Natural killer cell (primary cell): ENCODE measurements at regions of chr1 and their contacts with region 1.

Region 1: DNA sequence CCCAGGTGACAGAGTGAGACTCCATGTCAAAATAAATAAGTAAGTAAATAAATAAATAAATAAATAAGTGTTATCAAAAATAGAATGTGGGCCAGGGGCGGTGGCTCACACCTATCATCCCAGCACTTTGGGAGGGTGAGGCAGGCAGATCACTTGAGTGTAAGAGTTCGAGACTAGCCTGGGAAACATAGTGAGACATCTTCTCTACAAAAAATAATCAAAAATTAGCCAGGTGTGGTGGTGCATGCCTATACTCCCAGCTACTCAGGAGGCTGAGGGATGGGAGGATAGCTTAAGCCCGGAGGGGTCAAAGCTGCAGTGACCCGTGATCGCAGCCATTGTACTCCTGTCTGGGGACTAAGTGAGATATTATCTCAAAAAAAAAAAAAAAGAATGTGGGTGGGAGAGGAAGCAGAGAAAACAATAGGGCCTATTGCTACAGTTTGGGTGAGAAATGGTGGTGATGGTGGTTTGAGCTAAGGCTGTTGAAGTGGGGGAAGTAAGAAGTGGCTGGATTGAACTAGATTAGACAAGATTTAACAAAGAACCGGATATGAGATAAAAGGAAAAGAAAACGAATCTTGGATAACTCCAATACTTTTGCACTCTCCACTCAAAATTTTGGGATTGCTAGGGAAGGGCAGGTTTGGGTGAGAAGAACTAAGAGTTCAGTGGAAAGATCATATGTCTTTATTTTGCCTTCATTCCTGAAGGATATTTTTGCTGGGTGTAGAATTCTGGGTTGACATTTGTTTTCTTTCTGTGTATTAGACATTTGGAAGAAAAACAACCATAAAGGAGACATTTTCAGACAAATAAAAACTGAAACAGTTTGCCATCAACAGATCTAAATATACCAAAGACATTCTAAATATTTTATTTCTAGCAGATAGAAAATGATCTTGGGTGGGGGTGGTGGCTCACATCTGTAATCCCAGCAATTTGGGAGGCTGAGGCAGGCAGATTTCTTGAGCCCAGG is 57.1 kb upstream of the SPOCD1 start:
- DNase-seq: peak in 1 of 2 donors; percentile 70
- ATAC-seq: peak; percentile 87 to 98 (median 93)
- H3K4me3 ChIP-seq: no peak overlapping the region
- H3K4me3 Mint-ChIP-seq: peak overlapping the region; percentile 83
- H3K27ac ChIP-seq: peak overlapping the region; percentile 93
- H3K27ac Mint-ChIP-seq: peak overlapping the region; percentile 88 to 90
- H3K4me1 ChIP-seq: peaks cover 26% of the 10 kb centered on the region
- H3K4me1 Mint-ChIP-seq: peaks cover 40 to 52% of the 10 kb centered on the region in 2 donors
- H3K27me3 ChIP-seq: no peaks in the 10 kb centered on the region
- H3K27me3 Mint-ChIP-seq: no peaks in the 10 kb centered on the region
- CTCF ChIP-seq: no peak

Region 2: DNA sequence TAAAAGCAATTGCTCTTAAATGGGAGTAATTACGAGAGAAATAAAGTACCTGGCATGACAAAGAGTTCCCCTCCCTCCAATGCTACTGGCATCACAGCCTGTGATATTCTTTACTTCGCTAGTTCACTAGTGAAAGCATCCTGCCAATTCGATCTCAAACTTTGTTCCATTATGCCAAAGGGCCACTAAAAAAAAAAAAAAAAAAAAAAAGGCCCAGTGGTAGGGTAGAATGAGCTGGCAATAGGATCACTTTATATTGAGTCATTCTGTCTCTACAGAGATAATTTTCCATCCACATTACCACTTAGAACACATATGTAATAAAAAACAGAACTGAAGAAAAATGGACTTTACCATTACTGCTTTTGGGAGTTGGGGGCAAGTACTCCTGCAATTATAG is 818.6 kb before region 1 on chr1:
- intact Hi-C with region 1: no loop called
- DNase-seq: no peak
- ATAC-seq: peak in 1 of 3 donors; percentile 34
- H3K4me3 ChIP-seq: no peak overlapping the region
- H3K4me3 Mint-ChIP-seq: peak overlapping the region; percentile 58
- H3K27ac ChIP-seq: no peak overlapping the region
- H3K27ac Mint-ChIP-seq: peak overlapping the region; percentile 70 to 83
- H3K4me1 ChIP-seq: peaks cover 34% of the 10 kb centered on the region
- H3K4me1 Mint-ChIP-seq: peaks cover 52 to 55% of the 10 kb centered on the region in 2 donors
- H3K27me3 ChIP-seq: no peaks in the 10 kb centered on the region
- H3K27me3 Mint-ChIP-seq: no peaks in the 10 kb centered on the region
- CTCF ChIP-seq: no peak

Region 3: GRCh38 chr1:31831397-31832378 is 41.3 kb before region 1 on chr1:
- intact Hi-C with region 1: loop called (anchors 5 kb)
- DNase-seq: no peak
- ATAC-seq: no peak
- H3K4me3 ChIP-seq: no peak overlapping the region
- H3K4me3 Mint-ChIP-seq: no peak overlapping the region
- H3K27ac ChIP-seq: no peak overlapping the region
- H3K27ac Mint-ChIP-seq: no peak overlapping the region
- H3K4me1 ChIP-seq: peaks cover 29% of the 10 kb centered on the region
- H3K4me1 Mint-ChIP-seq: peaks cover 35 to 38% of the 10 kb centered on the region in 2 donors
- H3K27me3 ChIP-seq: no peaks in the 10 kb centered on the region
- H3K27me3 Mint-ChIP-seq: no peaks in the 10 kb centered on the region
- CTCF ChIP-seq: no peak

Region 4: GRCh38 chr1:31912839-31913239 is 39.9 kb after region 1 on chr1:
- intact Hi-C with region 1: loop called (anchors 1 kb)
- DNase-seq: no peak
- ATAC-seq: no peak
- H3K4me3 ChIP-seq: no peak overlapping the region
- H3K4me3 Mint-ChIP-seq: peak overlapping the region; percentile 13
- H3K27ac ChIP-seq: no peak overlapping the region
- H3K27ac Mint-ChIP-seq: peak overlapping the region; percentile 66 to 72
- H3K4me1 ChIP-seq: peaks cover 3% of the 10 kb centered on the region
- H3K4me1 Mint-ChIP-seq: peaks cover 49 to 59% of the 10 kb centered on the region in 2 donors
- H3K27me3 ChIP-seq: no peaks in the 10 kb centered on the region
- H3K27me3 Mint-ChIP-seq: no peaks in the 10 kb centered on the region
- CTCF ChIP-seq: no peak

Region 5: GRCh38 chr1:31944205-31945089 is 71.5 kb after region 1 on chr1:
- intact Hi-C with region 1: loop called (anchors 5 kb)
- DNase-seq: peak; percentile 63 to 87
- ATAC-seq: peak; percentile 50 to 83 (median 70)
- H3K4me3 ChIP-seq: peak overlapping the region; percentile 49
- H3K4me3 Mint-ChIP-seq: peak overlapping the region; percentile 81
- H3K27ac ChIP-seq: peak overlapping the region; percentile 89
- H3K27ac Mint-ChIP-seq: peak overlapping the region; percentile 91 to 94
- H3K4me1 ChIP-seq: peaks cover 67% of the 10 kb centered on the region
- H3K4me1 Mint-ChIP-seq: peaks cover 42 to 53% of the 10 kb centered on the region in 2 donors
- H3K27me3 ChIP-seq: no peaks in the 10 kb centered on the region
- H3K27me3 Mint-ChIP-seq: no peaks in the 10 kb centered on the region
- CTCF ChIP-seq: no peak